ENCODE measurements at regions of chrX and their contacts with region 1.

Region 1: GRCh38 chrX:11461201-11462001 is 168.2 kb downstream of the AMELX start:
- DNase-seq: no peak
- ATAC-seq: no peak
- H3K4me3 ChIP-seq: no peak overlapping the region
- H3K27ac ChIP-seq: no peak overlapping the region
- H3K4me1 ChIP-seq: peaks cover 24% of the 10 kb centered on the region
- H3K27me3 ChIP-seq: no peaks in the 10 kb centered on the region
- CTCF ChIP-seq: no peak

Region 2: GRCh38 chrX:11143931-11144678 is 317.3 kb before region 1 on chrX:
- CTCF ChIA-PET with region 1: no interaction called
- POLR2A ChIA-PET with region 1: no interaction called
- intact Hi-C with region 1: loop called (anchors 1 kb)
- DNase-seq: peak; percentile 91
- ATAC-seq: peak; percentile 88
- H3K4me3 ChIP-seq: peak overlapping the region; percentile 35; the same call in 1 of the 2 replicates
- H3K27ac ChIP-seq: no peak overlapping the region
- H3K4me1 ChIP-seq: no peaks in the 10 kb centered on the region
- H3K27me3 ChIP-seq: no peaks in the 10 kb centered on the region
- CTCF ChIP-seq: peak; percentile 68

Region 3: GRCh38 chrX:11381464-11381863 is 79.9 kb before region 1 on chrX:
- CTCF ChIA-PET with region 1: no interaction called
- POLR2A ChIA-PET with region 1: no interaction called
- intact Hi-C with region 1: loop called (anchors 5 kb)
- DNase-seq: peak; percentile 77
- ATAC-seq: peak; percentile 77
- H3K4me3 ChIP-seq: no peak overlapping the region
- H3K27ac ChIP-seq: no peak overlapping the region
- H3K4me1 ChIP-seq: peaks cover 39% of the 10 kb centered on the region
- H3K27me3 ChIP-seq: no peaks in the 10 kb centered on the region
- CTCF ChIP-seq: peak; percentile 71

Region 4: DNA sequence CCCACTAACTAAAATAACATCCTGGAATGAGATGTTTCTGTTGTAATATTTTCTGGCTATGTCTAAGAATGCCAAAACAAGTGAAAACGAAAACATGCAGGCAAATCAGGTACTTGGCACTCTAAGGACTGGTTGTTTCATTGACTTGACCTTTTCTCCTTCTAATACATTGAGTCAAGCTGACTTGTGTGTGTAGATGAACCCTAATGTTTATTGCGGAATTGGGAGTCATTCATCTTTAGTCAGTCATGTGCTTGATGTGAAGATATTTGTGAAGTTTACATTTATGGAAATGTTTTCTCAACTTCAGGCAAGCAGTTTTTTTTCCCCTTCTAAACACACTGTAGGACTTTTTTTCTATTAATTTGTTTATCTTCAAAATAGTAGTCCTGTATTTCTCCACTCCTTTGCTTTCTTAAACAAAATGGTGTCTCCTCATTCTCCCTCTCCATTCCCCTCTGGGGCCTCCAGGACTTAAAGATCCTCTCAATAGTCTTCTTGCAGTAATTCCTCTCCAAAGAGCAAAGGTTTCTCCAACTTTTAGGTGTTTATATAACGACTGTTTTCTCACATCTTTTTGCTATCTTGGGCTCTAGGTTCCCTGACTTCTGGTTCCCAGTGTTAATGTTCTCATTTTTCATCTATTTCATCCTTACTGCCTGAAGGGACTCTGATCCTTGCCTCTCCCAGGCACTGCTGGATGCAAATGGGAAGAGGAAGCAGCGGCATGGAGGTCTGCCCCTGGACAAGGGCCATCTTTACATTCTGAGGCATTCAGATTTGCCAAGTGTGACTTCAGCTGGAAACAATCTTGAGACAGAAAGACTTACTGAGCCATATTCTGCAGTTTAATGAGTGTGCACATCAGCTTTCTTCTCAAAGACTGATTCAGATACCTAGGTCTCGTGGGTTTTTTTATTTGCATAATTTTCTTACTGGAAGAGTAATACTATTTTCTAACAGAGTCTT is 38.0 kb after region 1 on chrX:
- CTCF ChIA-PET with region 1: interaction called, 4 read pairs
- POLR2A ChIA-PET with region 1: no interaction called
- intact Hi-C with region 1: loop called (anchors 5 kb)
- DNase-seq: peak; percentile 6
- ATAC-seq: no peak; the same call in 1 of the 2 replicates
- H3K4me3 ChIP-seq: no peak overlapping the region
- H3K27ac ChIP-seq: no peak overlapping the region
- H3K4me1 ChIP-seq: no peaks in the 10 kb centered on the region
- H3K27me3 ChIP-seq: no peaks in the 10 kb centered on the region
- CTCF ChIP-seq: no peak

Region 5: DNA sequence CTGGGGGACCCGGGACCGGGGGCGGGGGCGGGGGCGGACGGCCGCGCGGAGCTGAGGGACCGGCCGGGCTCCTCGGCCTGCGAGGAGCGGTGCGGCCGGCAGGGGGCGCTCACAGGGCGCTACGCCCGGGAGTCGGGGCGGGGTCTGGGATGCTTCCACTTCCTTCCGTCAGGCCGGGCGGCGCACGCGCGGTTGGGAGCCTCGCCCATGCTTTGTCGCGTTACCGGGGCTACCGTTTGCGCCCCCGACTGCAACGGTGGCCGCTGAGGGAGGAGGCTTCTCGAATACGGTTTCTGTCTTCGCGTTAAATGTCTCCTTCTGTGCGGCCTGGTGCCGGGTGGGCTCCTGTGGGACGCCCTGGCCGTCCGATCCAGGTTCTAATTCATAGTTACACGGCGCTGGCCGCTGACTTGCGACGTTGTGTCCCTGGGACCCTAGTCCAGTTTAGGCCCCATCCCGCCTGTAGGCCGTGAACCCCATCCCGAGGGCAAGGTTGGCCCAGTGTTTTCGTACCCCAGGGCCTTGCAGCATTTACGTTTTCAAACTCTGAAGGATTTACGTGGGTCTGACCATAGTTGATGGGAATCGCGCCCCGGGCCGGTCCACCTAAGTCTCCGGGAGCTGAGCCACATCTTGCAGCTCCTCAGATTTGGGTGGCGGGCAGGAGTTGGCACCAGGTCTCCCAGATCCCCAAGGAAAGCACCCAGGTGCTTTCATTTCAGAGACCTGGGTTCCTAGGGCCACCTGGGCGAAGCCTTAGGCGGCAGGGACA is 297.2 kb after region 1 on chrX:
- CTCF ChIA-PET with region 1: no interaction called
- POLR2A ChIA-PET with region 1: no interaction called
- intact Hi-C with region 1: loop called (anchors 5 kb)
- DNase-seq: peak; percentile 83
- ATAC-seq: peak; percentile 49
- H3K4me3 ChIP-seq: peak overlapping the region; percentile 84
- H3K27ac ChIP-seq: peak overlapping the region; percentile 50
- H3K4me1 ChIP-seq: peaks cover 33% of the 10 kb centered on the region
- H3K27me3 ChIP-seq: no peaks in the 10 kb centered on the region
- CTCF ChIP-seq: peak; percentile 53